MCF 10A (cell line): ENCODE measurements at regions of chr20 and their contacts with region 1.

Region 1: GRCh38 chr20:38357653-38358207 is 11.4 kb downstream of the LBP start:
- DNase-seq: no peak
- H3K4me3 Mint-ChIP-seq: no peak overlapping the region
- H3K27ac Mint-ChIP-seq: no peak overlapping the region
- H3K4me1 Mint-ChIP-seq: no peaks in the 10 kb centered on the region
- H3K27me3 Mint-ChIP-seq: no peaks in the 10 kb centered on the region
- CTCF ChIP-seq: no peak

Region 2: DNA sequence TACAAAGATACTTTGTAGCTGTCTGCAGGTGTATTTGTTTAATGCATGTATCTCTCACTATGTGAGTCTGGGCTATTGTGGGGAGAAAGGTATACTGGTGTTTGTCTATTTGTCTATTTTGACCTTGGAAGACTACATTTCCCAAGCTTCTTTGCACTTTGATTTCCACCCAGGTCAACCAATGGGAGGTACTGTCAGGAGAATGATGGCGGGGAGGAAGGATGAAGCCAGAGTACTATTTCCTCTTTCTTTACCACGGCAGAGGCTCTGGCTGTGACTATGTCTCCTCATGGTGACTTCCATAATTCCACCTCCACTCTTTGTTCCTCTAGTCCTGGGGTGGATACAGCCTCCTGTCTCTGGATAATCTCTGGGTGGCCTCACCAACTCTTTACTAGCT is 11.7 kb after region 1 on chr20:
- CTCF ChIA-PET with region 1: interaction called, 18 read pairs
- POLR2A ChIA-PET with region 1: interaction called, 3 read pairs
- intact Hi-C with region 1: no loop called
- DNase-seq: no peak
- H3K4me3 Mint-ChIP-seq: no peak overlapping the region
- H3K27ac Mint-ChIP-seq: no peak overlapping the region
- H3K4me1 Mint-ChIP-seq: no peaks in the 10 kb centered on the region
- H3K27me3 Mint-ChIP-seq: peaks cover 36% of the 10 kb centered on the region
- CTCF ChIP-seq: no peak

Region 3: DNA sequence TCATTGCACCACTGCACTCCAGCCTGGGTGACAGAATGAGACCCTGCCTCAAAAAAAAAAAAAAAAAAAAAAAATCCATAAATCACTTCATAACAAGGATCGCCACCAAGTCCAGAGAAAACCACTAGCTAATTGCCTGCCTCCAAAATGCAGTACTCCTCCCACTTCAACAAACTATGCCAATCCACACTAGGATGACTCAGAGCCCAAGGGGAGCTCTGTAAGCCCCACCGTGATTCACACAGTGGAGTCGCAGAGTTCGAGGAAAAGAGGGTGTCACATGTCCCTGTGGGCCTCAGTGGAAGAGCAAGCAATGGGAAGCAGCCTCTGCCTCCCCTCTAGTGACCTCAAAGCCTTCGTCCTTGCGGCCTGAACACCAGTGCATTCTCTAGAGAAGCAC is 68.3 kb after region 1 on chr20:
- CTCF ChIA-PET with region 1: no interaction called
- POLR2A ChIA-PET with region 1: no interaction called
- intact Hi-C with region 1: no loop called
- DNase-seq: peak; percentile 89
- H3K4me3 Mint-ChIP-seq: no peak overlapping the region
- H3K27ac Mint-ChIP-seq: no peak overlapping the region
- H3K4me1 Mint-ChIP-seq: peaks cover 26% of the 10 kb centered on the region
- H3K27me3 Mint-ChIP-seq: no peaks in the 10 kb centered on the region
- CTCF ChIP-seq: no peak

Region 4: DNA sequence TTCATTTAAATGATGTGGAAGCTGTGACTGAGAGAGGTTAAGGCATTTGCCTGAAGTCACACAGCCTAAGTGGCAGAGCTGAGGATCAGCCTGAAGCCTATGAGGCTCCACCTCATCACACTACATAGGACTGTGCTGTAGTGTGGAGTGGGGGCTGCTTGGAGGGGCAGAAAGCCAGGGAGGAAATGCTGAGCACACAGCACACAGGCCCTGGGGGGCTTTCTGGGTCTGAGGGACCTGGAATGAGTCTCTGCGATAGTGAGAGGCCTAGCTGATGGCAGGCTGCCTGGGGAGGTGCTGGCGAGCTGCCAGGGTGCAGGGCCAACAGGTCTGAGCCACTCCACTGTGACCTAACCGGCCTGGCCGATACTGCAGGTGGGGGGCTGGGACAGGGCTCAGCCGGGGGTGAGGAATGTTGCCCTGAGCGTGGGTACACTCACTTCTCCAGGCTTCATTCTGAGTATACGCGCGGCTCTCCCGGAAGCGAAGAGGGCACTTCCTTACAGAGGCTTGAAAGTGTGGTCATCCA is 241.7 kb after region 1 on chr20:
- CTCF ChIA-PET with region 1: no interaction called
- POLR2A ChIA-PET with region 1: no interaction called
- intact Hi-C with region 1: no loop called
- DNase-seq: peak; percentile 72
- H3K4me3 Mint-ChIP-seq: no peak overlapping the region
- H3K27ac Mint-ChIP-seq: no peak overlapping the region
- H3K4me1 Mint-ChIP-seq: peaks cover 19% of the 10 kb centered on the region
- H3K27me3 Mint-ChIP-seq: peaks cover 15% of the 10 kb centered on the region
- CTCF ChIP-seq: no peak